BJ (cell line): ENCODE measurements at regions of chr1 and their contacts with region 1.

Region 1: DNA sequence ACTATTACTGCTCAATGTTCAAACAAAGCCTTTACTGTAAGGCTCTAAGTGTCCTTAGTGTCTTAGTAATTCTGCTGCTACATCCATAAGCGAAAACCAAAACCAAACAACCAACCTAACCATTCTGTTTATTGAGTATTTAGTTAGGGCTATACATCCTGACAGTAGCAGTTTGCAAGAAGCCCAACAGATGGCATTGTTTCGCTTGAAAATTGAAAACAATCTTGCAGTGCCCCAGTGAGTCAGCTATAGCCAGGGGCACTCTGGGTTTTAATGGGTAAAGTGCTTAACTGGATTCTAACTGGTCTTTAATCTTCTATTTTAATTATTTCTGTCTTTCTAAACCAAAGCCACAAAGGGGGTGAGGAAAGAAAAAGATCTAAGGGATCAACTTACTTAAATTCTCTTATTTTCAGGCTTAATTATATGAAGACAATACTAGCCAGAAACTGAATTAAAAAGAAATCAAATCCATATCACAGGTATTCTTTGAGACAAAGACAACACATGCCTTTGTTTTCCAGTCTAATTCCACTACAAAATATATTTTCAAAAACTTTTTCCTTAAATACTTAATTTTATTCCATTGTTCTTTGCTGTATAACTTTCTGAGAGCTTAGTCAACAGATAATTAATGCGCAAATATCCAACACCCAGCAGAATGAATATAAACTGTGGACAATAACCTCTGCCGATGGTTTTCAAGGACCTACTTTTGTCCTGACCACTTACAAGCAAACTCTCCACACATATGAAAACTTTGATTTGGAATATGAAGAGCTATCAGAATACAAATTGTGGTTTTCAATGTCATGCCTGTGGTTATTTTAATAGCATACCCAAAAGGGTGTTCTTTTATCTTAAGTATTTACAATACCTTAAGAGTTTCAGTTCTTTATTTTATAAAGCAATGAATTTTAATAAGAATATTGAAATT is 15.2 kb downstream of the POGZ start:
- DNase-seq: peak; percentile 53
- H3K4me3 ChIP-seq: no peak overlapping the region
- H3K27me3 ChIP-seq: no peaks in the 10 kb centered on the region
- CTCF ChIP-seq: peak; percentile 75

Region 2: GRCh38 chr1:151455231-151455630 is 11.1 kb after region 1 on chr1:
- CTCF ChIA-PET with region 1: interaction called, 11 read pairs
- POLR2A ChIA-PET with region 1: no interaction called
- DNase-seq: no peak
- H3K4me3 ChIP-seq: no peak overlapping the region
- H3K27me3 ChIP-seq: no peaks in the 10 kb centered on the region
- CTCF ChIP-seq: no peak